Activated CD4-positive, alpha-beta T cell treated with anti-CD3 and anti-CD28 coated beads, Interleukin-2, amount 10 ng/mL, durations not matched to agents 24 days and 14 days (primary cell): ENCODE measurements at regions of chr2 and their contacts with region 1.

Region 1: DNA sequence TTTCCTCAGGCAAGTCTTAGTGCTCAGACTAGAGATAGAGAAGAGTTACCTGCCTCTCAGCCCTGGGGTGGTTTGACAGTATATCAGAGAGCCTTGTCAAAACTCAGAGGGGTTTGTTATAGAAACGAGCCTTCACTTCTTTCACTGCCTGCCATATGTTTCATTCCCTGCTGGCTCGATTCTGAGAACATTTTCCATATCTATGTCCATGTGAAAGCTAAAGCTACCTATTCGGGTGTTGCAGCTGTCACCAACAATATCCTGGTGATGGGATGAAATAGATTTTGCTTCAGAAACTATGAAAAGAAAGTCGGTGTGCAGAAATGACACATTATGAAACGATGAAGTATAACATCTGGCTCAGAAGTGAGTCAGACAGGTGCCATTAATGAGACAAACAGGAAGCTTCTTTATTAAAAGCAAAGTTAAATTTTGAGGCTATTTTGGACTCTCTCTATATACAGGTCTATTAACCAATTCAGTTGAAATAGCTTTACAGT is 56.1 kb upstream of the TANK start:
- DNase-seq: peak; percentile 54
- H3K4me3 Mint-ChIP-seq: peak overlapping the region; percentile 31
- H3K27ac Mint-ChIP-seq: peak overlapping the region; percentile 38
- H3K4me1 Mint-ChIP-seq: peaks cover 14% of the 10 kb centered on the region
- H3K27me3 Mint-ChIP-seq: no peaks in the 10 kb centered on the region

Region 2: DNA sequence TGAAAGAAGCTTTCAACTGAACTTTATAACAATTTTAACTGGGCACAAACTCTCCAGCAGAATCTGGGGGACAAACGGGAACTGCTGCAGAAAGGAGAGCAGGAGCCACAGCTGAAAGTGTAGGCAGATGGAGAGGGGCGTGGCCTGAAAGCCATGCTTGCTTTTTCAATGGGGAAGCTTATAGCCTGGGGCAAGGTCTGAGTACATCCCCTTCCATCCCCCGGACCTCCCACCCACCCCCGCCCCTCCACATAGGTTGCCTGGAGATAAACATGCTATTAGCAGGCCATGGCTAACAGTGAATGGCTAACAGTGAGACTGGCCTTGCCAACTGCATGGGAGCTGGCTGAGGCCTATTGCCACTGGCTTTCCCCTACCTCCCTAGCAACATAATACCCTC is 261.8 kb before region 1 on chr2:
- intact Hi-C with region 1: no loop called
- DNase-seq: no peak
- H3K4me3 Mint-ChIP-seq: no peak overlapping the region
- H3K27ac Mint-ChIP-seq: no peak overlapping the region
- H3K4me1 Mint-ChIP-seq: no peaks in the 10 kb centered on the region
- H3K27me3 Mint-ChIP-seq: peaks cover 7% of the 10 kb centered on the region

Region 3: GRCh38 chr2:161090411-161090810 is 13.7 kb before region 1 on chr2:
- intact Hi-C with region 1: loop called (anchors 2 kb)
- DNase-seq: peak; percentile 88
- H3K4me3 Mint-ChIP-seq: peak overlapping the region; percentile 69
- H3K27ac Mint-ChIP-seq: peak overlapping the region; percentile 88
- H3K4me1 Mint-ChIP-seq: peaks cover 49% of the 10 kb centered on the region
- H3K27me3 Mint-ChIP-seq: no peaks in the 10 kb centered on the region

Region 4: GRCh38 chr2:161122772-161123530 is 18.8 kb after region 1 on chr2:
- intact Hi-C with region 1: loop called (anchors 1 kb)
- DNase-seq: peak; percentile 69
- H3K4me3 Mint-ChIP-seq: peak overlapping the region; percentile 1
- H3K27ac Mint-ChIP-seq: peak overlapping the region; percentile 42
- H3K4me1 Mint-ChIP-seq: peaks cover 20% of the 10 kb centered on the region
- H3K27me3 Mint-ChIP-seq: no peaks in the 10 kb centered on the region

Region 5: GRCh38 chr2:161166538-161167409 is 62.7 kb after region 1 on chr2:
- intact Hi-C with region 1: loop called (anchors 2 kb)
- DNase-seq: peak; percentile 90
- H3K4me3 Mint-ChIP-seq: peak overlapping the region; percentile 69
- H3K27ac Mint-ChIP-seq: peak overlapping the region; percentile 94
- H3K4me1 Mint-ChIP-seq: peaks cover 76% of the 10 kb centered on the region
- H3K27me3 Mint-ChIP-seq: no peaks in the 10 kb centered on the region

Region 6: GRCh38 chr2:161199912-161200701 is 96.0 kb after region 1 on chr2:
- intact Hi-C with region 1: no loop called
- DNase-seq: no peak
- H3K4me3 Mint-ChIP-seq: peak overlapping the region; percentile 4
- H3K27ac Mint-ChIP-seq: peak overlapping the region; percentile 78
- H3K4me1 Mint-ChIP-seq: peaks cover 21% of the 10 kb centered on the region
- H3K27me3 Mint-ChIP-seq: no peaks in the 10 kb centered on the region

Region 7: DNA sequence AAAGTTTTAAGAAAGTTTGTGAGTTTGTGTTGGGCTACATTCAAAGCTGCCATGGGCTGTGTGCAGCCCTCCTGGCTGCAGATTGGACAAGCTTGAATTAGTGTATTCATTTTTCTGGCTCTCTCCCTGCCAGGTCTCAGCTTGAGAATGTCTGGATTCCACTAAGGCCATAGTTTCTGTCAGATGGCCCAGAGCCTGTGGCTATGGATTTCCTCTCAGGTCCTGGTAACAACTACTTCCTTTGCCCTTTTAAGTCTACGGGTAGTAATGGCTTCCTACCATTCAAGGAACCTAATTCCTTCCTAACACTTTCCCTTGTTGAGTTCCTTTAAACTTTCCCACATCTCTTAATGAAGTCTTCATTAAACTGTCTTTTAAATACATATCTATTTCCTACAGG is 179.8 kb after region 1 on chr2:
- intact Hi-C with region 1: no loop called
- DNase-seq: no peak
- H3K4me3 Mint-ChIP-seq: no peak overlapping the region
- H3K27ac Mint-ChIP-seq: no peak overlapping the region
- H3K4me1 Mint-ChIP-seq: no peaks in the 10 kb centered on the region
- H3K27me3 Mint-ChIP-seq: peaks cover 46% of the 10 kb centered on the region